ENCODE measurements at regions of chr2 and their contacts with region 1.

Region 1: DNA sequence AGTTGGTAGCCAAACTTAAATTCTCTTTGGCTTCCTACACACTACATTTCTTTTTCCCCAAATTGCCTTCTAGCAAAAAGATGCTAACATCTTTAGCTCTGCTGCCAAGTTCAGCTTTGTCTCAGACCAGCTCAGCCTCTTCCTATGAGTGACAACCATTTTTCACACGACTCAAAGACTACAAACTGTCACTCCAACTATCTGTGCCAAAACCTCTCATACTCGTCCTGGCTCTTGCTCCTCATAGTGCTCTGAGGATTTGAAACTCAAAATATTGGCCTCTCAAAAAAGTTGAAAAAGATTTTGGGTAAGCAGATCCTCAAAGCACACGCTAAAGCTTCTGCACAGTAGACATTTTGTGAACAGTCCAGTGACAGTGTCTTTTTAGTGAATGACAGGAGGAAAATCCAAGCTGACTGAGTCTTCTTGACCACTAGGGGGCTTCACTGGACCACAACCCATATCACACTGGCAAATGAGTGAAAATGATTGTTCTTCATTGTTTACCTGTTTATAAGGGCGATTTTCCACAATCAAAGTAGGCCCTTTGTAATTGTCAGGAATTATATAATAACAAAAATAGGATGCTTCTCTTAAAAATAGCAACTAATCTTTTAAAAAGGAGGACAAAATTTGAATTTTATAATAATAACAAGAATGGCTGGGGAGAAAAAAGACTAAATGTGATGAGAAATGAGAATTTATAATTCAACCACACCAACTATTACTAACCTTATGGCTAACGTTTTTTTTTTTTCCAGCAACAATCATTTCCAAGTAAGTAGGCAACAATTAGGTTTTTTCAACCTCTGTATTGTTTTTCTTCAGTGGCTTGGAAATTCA is 85.5 kb upstream of the PGAP1 start:
- DNase-seq: peak in 1 of 5 donors; percentile 22
- ATAC-seq: peak in 3 of 4 donors; percentile 66 to 73 (median 72)
- H3K4me3 ChIP-seq: no peak overlapping the region
- H3K27ac ChIP-seq: no peak overlapping the region
- H3K4me1 ChIP-seq: peaks cover 0 to 9% (median 0%) of the 10 kb centered on the region in 12 donors
- H3K27me3 ChIP-seq: no peaks in the 10 kb centered on the region
- CTCF ChIP-seq: peak; percentile 64 to 91 (median 82)
- POLR2A ChIP-seq: no peak

Region 2: GRCh38 chr2:196902828-196903227 is 109.2 kb before region 1 on chr2:
- intact Hi-C with region 1: no loop called
- DNase-seq: no peak
- ATAC-seq: no peak
- H3K4me3 ChIP-seq: no peak overlapping the region
- H3K27ac ChIP-seq: no peak overlapping the region
- H3K4me1 ChIP-seq: no peaks in the 10 kb centered on the region
- H3K27me3 ChIP-seq: no peaks in the 10 kb centered on the region
- CTCF ChIP-seq: no peak
- POLR2A ChIP-seq: no peak

Region 3: GRCh38 chr2:197168705-197169104 is 156.7 kb after region 1 on chr2:
- intact Hi-C with region 1: loop called in 7 of 10 experiments (anchors 2 to 10 kb)
- DNase-seq: peak; percentile 36 to 68 (median 53)
- ATAC-seq: peak in 3 of 4 donors; percentile 61 to 83 (median 69)
- H3K4me3 ChIP-seq: no peak overlapping the region
- H3K27ac ChIP-seq: no peak overlapping the region
- H3K4me1 ChIP-seq: peaks cover 0 to 32% (median 4%) of the 10 kb centered on the region in 12 donors
- H3K27me3 ChIP-seq: no peaks in the 10 kb centered on the region
- CTCF ChIP-seq: peak; percentile 26 to 59 (median 43)
- POLR2A ChIP-seq: no peak

Region 4: DNA sequence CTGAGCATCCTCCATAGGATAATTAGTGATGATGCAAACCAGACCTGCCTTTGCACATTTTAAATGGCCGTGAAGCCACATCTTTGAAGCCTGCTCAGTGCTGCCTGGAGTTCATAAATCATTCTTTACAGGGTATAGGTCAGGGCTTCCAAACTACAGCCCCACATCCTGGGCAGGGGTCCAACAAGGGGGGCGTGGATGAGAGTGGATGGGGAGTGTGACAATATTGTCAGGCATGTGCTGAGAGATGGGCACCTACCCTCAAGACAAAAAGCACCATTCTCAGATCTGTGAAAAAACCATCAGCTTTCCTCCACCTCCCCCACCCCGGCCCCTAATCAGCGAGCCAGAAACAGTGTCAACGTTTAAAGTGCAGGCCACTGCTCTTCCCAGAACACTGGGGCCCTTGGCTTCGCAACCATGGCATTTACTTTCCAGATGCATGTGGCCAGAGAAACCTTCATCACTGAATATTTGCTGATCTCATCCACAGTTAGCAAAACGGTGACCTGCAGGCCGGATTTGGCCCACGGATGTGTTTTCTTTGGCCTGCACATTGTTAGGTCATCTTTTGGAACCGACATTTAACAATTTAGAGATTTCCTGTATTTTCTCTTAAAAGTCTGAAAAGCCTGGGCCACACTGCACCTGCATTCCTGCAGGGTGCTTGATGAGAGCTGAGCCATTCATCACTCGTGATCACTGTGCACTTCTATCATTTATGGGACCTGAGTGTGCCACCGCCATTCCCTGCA is 167.9 kb after region 1 on chr2:
- intact Hi-C with region 1: loop called in 2 of 10 experiments (anchors 10 kb)
- DNase-seq: peak in 4 of 5 donors; percentile 36 to 59 (median 49)
- ATAC-seq: peak; percentile 22 to 70 (median 60)
- H3K4me3 ChIP-seq: no peak overlapping the region
- H3K27ac ChIP-seq: peak overlapping the region in 3 of 12 donors; percentile 15 to 60 (median 43)
- H3K4me1 ChIP-seq: peaks cover 0 to 25% (median 14%) of the 10 kb centered on the region in 12 donors
- H3K27me3 ChIP-seq: no peaks in the 10 kb centered on the region
- CTCF ChIP-seq: no peak
- POLR2A ChIP-seq: no peak

Region 5: GRCh38 chr2:197310271-197310985 is 298.4 kb after region 1 on chr2 and contains the start of gene ANKRD44:
- intact Hi-C with region 1: loop called in 5 of 10 experiments (anchors 1 to 10 kb)
- DNase-seq: peak; percentile 92 to 96 (median 94)
- ATAC-seq: peak; percentile 90 to 99 (median 98)
- H3K4me3 ChIP-seq: peak within 1 kb of the TSS; percentile 56 to 97 (median 72)
- H3K27ac ChIP-seq: peak within 1 kb of the TSS; percentile 43 to 91 (median 70)
- H3K4me1 ChIP-seq: peaks cover 0 to 41% (median 19%) of the 10 kb centered on the region in 12 donors
- H3K27me3 ChIP-seq: no peaks in the 10 kb centered on the region
- CTCF ChIP-seq: peak in 10 of 12 donors; percentile 26 to 59 (median 42)
- POLR2A ChIP-seq: peak in 1 of 2 donors; percentile 58
- total RNA-seq, gene ANKRD44: 4.9 to 30.6 (median 8.6) TPM

Measured in heart left ventricle (tissue), 16 donors.